Right ventricle myocardium superior (tissue), 1 donor: ENCODE measurements at regions of chr1 and their contacts with region 1.

Region 1: GRCh38 chr1:232630047-232630893 is at the start of gene SIPA1L2:
- DNase-seq: peak; percentile 96
- ATAC-seq: peak; percentile 97
- total RNA-seq, gene SIPA1L2: 120 TPM

Region 2: DNA sequence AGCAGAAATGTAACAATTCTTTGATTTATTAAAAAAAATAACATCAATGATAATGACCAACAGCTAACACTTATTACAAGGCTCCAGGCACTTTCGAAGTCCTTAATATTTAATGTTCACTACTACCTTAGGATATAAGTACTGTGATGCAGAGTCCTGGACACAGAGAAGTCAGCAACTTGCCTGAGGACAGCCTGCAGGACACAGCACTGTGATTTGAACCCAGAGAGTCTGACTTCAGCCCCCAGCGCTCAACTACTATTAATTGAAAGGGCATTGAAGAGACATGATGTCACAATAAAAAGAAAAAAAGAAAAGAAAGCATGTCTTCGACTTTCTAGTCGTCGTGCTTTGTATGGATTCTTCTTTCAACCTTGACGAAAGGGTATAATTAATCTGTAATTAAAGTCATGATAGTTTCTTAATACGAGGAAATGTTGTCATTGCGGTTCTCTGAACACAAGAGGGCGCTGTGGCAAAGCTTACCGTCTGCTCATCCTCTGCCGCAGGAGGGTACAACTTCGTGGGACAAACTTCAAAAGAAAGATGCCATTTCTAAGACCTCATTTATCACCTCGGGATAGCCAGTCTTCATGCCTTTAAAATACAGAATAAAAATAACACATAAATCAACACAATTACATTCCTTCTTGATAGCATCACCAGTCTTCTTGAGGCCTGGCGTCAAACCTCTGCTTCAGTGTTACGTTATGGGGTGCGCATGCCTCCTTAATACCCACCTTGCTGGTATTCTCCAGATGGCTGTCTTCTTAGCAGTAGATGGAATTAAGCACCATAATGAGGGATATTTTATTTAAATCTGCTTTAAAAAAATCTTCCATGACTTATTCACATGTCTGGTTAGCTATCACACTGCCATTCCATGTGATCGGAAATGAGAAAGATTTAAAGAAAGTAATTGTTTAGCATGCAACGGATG is 763.6 kb before region 1 on chr1:
- intact Hi-C with region 1: loop called (anchors 10 kb)
- DNase-seq: peak; percentile 64
- ATAC-seq: peak; percentile 58

Region 3: GRCh38 chr1:232319072-232319471 is 311.2 kb before region 1 on chr1:
- intact Hi-C with region 1: loop called (anchors 10 kb)
- DNase-seq: peak; percentile 91
- ATAC-seq: peak; percentile 94

Region 4: DNA sequence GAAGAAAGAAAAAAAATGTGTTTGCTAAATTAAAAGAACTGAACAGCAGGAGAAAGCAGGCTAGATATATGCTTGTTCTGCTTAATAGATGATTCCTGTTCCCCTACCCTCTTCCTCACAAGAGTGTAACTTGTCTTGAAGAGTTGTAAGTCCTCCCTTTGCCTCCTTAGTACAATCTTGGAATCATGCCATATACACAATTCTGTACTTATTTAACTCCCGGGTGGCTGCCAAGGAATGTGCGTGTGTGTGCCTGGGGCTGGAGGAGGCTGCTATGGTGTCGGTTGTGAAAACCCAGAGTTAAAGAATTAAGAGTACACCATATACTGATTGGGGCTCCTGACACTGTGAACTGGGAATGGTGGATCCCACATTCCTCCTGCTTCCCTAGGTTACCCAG is 194.5 kb before region 1 on chr1:
- intact Hi-C with region 1: loop called (anchors 10 kb)
- DNase-seq: peak; percentile 59
- ATAC-seq: peak; percentile 26

Region 5: DNA sequence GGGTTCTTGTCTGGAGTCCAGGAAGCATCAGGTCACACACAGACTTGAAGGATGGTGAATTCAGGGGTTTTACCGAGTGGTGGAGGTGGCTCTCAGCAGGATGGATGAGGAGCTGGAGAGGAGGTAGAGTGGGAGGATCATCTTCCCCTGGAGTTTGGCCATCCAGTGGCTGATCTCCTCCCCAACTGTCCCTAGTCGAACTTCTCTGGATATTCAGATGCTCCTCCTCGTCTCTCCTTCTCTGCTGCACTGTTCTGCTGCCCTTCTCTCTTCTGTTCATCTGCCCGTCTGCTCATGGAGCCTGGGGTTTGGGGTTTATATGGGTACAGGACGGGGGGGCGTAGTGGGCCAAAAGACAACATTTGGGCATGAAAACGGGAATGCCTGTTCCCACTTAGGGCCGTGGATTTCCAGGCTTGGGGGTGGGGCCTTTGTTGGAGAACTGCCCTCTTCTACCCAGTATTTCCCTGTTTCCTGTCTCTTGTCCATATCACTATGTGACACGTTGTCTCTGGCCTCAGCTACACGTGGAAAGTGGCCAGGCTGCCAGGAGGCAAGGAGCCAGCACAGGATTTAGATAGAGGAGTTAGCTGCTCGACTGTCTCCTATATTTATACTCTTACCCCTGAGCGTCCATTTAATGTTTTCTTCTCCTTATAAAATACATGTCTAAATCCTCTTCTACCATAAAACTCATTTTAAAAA is 77.1 kb before region 1 on chr1:
- intact Hi-C with region 1: loop called (anchors 10 kb)
- DNase-seq: peak; percentile 90
- ATAC-seq: peak; percentile 88

Region 6: GRCh38 chr1:232968965-232969364 is 338.7 kb after region 1 on chr1:
- intact Hi-C with region 1: loop called (anchors 10 kb)
- DNase-seq: peak; percentile 75
- ATAC-seq: peak; percentile 95